CD8-positive, alpha-beta memory T cell (primary cell): ENCODE measurements at regions of chr1 and their contacts with region 1.

Region 1: GRCh38 chr1:46527474-46528296 is 23.8 kb downstream of the KNCN start:
- DNase-seq: peak; percentile 46 to 73 (median 58)
- H3K4me3 ChIP-seq: no peak overlapping the region
- H3K4me3 Mint-ChIP-seq: peak overlapping the region in 1 of 7 donors; percentile 28
- H3K27ac ChIP-seq: peak overlapping the region; percentile 30
- H3K27ac Mint-ChIP-seq: peak overlapping the region in 1 of 8 donors; percentile 6
- H3K4me1 ChIP-seq: peaks cover 3% of the 10 kb centered on the region
- H3K4me1 Mint-ChIP-seq: peaks cover 0 to 2% (median 1%) of the 10 kb centered on the region in 3 donors
- H3K27me3 ChIP-seq: peaks cover 6% of the 10 kb centered on the region
- H3K27me3 Mint-ChIP-seq: peaks cover 4 to 47% of the 10 kb centered on the region in 2 donors

Region 2: GRCh38 chr1:46442317-46443161 is 85.1 kb before region 1 on chr1:
- CTCF ChIA-PET with region 1: interaction called, 35 read pairs
- POLR2A ChIA-PET with region 1: no interaction called
- DNase-seq: peak; percentile 46 to 70 (median 57)
- H3K4me3 ChIP-seq: peak overlapping the region; percentile 69
- H3K4me3 Mint-ChIP-seq: peak overlapping the region; percentile 77 to 94 (median 86)
- H3K27ac ChIP-seq: peak overlapping the region; percentile 73
- H3K27ac Mint-ChIP-seq: peak overlapping the region in 6 of 8 donors; percentile 20 to 89 (median 77)
- H3K4me1 ChIP-seq: no peaks in the 10 kb centered on the region
- H3K4me1 Mint-ChIP-seq: peaks cover 13 to 18% (median 16%) of the 10 kb centered on the region in 3 donors
- H3K27me3 ChIP-seq: no peaks in the 10 kb centered on the region
- H3K27me3 Mint-ChIP-seq: peaks cover 16 to 20% of the 10 kb centered on the region in 2 donors

Region 3: GRCh38 chr1:46508757-46509156 is 18.9 kb before region 1 on chr1:
- CTCF ChIA-PET with region 1: no interaction called
- POLR2A ChIA-PET with region 1: no interaction called
- DNase-seq: no peak
- H3K4me3 ChIP-seq: no peak overlapping the region
- H3K4me3 Mint-ChIP-seq: no peak overlapping the region
- H3K27ac ChIP-seq: no peak overlapping the region
- H3K27ac Mint-ChIP-seq: no peak overlapping the region
- H3K4me1 ChIP-seq: no peaks in the 10 kb centered on the region
- H3K4me1 Mint-ChIP-seq: no peaks in the 10 kb centered on the region
- H3K27me3 ChIP-seq: no peaks in the 10 kb centered on the region
- H3K27me3 Mint-ChIP-seq: peaks cover 21 to 39% of the 10 kb centered on the region in 2 donors